OCI-LY7 (cell line): ENCODE measurements at regions of chr5 and their contacts with region 1.

Region 1: GRCh38 chr5:139670369-139671095 is 22.4 kb downstream of the CXXC5 start:
- DNase-seq: peak; percentile 98
- H3K4me3 ChIP-seq: peak overlapping the region; percentile 74
- H3K27ac ChIP-seq: peak overlapping the region; percentile 99
- H3K4me1 ChIP-seq: peaks cover 89% of the 10 kb centered on the region
- CTCF ChIP-seq: peak; percentile 82

Region 2: DNA sequence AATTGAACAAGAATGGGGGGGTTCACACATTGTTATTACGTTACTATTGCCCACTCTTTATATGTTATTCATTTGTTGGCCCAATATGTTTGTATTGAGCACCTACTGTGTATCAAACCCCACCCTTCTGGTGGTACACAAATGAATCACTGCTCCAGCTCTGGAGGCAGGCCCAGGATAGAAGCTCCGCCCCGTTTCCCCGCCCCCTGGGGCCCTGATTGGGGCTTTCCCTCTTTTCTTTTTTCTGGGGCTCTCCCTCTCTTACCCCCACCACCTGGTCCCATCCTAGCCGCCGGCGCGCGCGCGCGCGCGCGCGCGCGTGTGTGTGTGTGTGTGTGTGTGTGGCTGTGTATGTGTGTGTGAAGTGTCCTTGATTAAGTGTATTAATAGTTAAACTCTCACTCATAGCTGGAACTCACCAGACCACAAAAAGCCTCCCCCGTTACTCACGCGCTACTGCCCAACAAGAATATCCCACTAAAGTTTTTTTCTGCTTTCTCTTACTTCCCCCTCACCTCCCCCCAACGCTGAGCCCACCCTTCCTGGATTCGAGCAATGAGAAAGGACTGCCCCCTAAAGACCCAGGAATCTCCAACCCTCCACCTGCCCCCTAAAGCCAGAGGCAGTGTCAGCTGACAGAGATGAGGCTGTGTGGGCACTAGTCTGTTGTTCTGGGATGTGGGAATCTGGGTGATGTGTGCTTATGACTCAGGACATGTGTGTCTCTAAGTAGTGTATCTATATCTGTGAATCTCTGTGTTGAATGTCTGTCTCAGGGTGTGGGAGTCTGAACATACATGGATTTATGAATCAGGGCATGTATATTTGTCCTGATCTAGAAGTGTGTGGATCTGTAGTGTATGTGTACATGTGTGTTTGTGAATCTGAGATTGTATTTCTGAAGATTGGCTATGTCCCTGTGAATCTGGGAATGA is 18.4 kb before region 1 on chr5:
- CTCF ChIA-PET with region 1: interaction called, 9 read pairs
- POLR2A ChIA-PET with region 1: interaction called, 73 read pairs
- intact Hi-C with region 1: loop called (anchors 1 kb)
- DNase-seq: peak; percentile 87
- H3K4me3 ChIP-seq: peak overlapping the region; percentile 94
- H3K27ac ChIP-seq: peak overlapping the region; percentile 89
- H3K4me1 ChIP-seq: peaks cover 72% of the 10 kb centered on the region
- CTCF ChIP-seq: no peak

Region 3: DNA sequence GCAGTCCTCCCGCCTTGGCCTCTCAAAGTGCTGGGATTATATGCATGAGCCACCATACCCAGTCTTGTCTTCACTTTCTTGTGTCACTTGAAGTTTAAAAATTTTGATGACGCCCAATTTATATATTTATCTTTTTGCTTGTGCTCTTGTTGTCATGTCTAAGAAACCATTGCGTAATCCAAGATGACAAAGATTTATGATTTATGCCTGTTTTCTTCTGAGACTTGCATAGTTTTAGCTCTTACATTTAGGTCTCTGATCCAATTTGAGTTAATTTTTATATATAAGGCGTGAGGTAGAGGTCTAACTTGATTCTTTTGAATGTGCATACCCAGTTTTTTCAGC is 749.7 kb after region 1 on chr5:
- CTCF ChIA-PET with region 1: no interaction called
- POLR2A ChIA-PET with region 1: no interaction called
- intact Hi-C with region 1: no loop called
- DNase-seq: no peak
- H3K4me3 ChIP-seq: no peak overlapping the region
- H3K27ac ChIP-seq: no peak overlapping the region
- H3K4me1 ChIP-seq: peaks cover 9% of the 10 kb centered on the region
- CTCF ChIP-seq: no peak